AG04449 (cell line): ENCODE measurements at regions of chr6 and their contacts with region 1.

Region 1: GRCh38 chr6:158072083-158072721 is 90.5 kb downstream of the SYNJ2 start:
- DNase-seq: no peak
- H3K4me3 ChIP-seq: no peak overlapping the region
- CTCF ChIP-seq: peak; percentile 75

Region 2: DNA sequence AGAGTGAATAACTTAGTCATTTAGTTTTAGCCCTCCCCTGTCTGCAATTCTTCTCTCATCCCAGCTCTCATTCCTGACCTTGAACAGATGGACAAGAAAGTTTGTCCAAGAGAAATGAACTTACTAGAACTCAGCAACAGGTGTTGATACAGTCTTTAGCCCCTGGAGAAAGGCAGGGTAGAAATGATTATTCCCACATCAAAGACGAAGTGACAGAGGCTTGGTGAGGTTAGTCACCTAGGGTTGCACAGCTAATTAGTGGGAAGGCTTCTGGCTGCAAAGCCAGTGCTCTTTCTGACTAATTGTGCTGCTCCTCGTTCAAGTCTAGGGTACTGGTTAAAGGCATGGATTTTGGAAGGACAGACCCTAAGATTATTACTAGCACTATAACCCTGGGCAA is 686.7 kb before region 1 on chr6:
- CTCF ChIA-PET with region 1: no interaction called
- POLR2A ChIA-PET with region 1: no interaction called
- DNase-seq: no peak
- H3K4me3 ChIP-seq: no peak overlapping the region
- CTCF ChIP-seq: no peak

Region 3: DNA sequence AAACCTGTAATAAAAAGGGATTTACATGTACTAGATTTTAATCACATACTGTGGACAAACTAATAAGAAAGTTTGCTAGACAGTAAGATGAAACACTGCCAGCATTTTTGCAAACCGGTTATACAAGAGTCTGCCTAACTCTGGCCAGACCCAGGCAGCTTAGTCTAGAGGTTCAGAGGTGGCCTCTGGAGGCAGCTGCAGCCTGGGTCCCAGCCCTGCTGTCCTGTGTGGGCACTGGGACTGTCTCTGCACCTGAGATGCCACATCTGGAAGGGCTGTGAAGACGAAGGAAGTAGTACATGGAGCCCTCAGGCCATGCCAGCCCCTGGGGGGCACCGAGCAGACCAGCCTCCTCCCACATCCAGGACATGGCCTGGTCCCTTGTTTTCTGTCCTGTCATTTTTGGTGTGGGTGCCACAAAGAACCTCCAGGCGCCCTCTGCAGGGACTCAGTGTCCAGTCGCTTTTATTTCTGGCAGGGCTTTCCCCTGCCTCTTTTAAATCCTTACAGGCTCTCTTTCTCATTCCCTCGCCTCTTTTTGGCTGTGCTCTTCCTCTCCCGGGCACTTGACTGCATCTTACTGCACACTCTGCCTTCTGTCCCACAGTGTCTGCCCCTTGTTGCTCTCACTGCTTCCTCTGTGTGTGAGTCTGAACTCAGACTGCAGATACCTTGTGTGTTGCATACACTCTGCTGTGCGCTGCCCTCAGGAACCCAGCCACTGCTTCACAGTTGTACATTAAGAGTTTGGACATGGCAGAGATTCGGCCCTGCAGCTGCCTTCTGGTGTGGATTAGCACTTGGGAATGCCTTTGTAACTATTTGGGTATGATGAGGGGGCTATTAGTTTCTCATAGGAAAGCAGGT is 474.5 kb before region 1 on chr6:
- CTCF ChIA-PET with region 1: no interaction called
- POLR2A ChIA-PET with region 1: no interaction called
- DNase-seq: no peak
- H3K4me3 ChIP-seq: no peak overlapping the region
- CTCF ChIP-seq: peak; percentile 49

Region 4: GRCh38 chr6:157898169-157898568 is 174.0 kb before region 1 on chr6:
- CTCF ChIA-PET with region 1: interaction called, 15 read pairs
- POLR2A ChIA-PET with region 1: no interaction called
- DNase-seq: no peak
- H3K4me3 ChIP-seq: no peak overlapping the region
- CTCF ChIP-seq: peak; percentile 22

Region 5: DNA sequence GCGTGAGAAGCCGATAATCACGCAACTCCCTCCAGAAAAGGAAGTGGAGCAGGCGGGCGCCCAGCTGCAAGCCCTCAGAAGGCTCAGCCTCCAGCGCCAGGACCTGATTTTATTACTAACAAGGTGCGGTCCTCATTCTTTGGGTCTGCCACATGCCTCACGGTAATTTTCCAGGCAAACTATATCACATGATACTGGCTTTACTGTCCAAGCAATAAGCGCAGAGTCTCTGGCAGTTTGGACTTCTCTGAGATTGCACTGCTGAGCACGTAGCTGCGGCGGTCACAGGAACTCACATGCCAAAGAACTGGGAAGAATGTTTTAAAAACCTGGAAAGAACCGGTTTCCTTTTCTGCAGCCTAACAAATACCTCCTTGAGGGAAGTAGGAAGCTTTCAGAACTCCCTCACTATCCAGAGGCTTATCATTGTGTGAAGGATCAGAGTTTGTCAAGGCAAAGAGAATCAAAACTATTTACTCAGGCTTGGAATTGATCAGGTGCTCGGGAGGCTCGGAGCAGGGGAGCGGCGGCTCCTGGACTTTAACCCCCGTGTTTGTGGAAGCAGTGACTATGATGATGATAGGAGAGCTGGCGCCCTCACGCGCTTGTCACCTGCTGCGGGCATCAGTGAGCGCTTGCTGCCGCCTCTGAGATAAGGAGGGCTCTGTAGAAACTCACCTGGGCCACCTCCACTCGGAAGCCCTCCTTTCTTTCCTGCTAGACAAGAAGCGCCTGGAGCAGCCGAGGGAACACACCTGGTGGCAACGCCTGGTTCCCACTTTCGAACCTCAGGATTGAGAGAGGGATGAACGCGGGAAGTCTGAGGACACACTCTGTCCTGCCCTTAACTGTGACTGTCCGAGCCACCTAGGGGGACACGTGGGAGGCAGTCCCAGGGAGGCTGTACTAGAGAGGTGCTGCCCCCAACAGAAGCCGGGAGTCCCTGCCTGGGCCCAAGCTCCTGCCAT is 117.8 kb before region 1 on chr6:
- CTCF ChIA-PET with region 1: interaction called, 12 read pairs
- POLR2A ChIA-PET with region 1: no interaction called
- DNase-seq: no peak
- H3K4me3 ChIP-seq: no peak overlapping the region
- CTCF ChIP-seq: no peak

Region 6: GRCh38 chr6:158009114-158009891 is 62.9 kb before region 1 on chr6:
- CTCF ChIA-PET with region 1: interaction called, 12 read pairs
- POLR2A ChIA-PET with region 1: no interaction called
- DNase-seq: no peak
- H3K4me3 ChIP-seq: no peak overlapping the region
- CTCF ChIP-seq: no peak

Region 7: GRCh38 chr6:158047127-158047518 is 25.1 kb before region 1 on chr6:
- CTCF ChIA-PET with region 1: interaction called, 36 read pairs
- POLR2A ChIA-PET with region 1: no interaction called
- DNase-seq: no peak
- H3K4me3 ChIP-seq: no peak overlapping the region
- CTCF ChIP-seq: no peak

Region 8: DNA sequence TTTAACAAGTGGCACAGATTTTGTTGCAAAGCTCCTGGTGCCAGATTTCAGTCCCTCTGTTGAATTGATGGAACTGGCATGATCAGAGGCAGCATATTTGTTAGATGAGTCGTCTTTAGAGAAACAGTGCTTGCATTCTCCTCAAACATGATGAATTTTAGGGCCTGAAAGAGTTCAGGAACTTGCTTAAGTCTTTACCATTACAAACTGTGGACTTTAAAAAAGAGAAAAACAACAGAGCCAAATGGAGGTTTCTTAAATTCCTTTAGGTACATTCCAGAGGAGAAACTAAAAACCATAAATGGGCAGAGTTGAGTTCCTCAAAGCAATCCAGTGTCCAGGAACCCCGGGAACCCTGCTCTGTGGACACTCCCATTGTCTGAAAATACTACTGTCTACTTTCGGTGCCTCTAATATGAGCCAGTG is 98.5 kb after region 1 on chr6:
- CTCF ChIA-PET with region 1: no interaction called
- POLR2A ChIA-PET with region 1: no interaction called
- DNase-seq: peak; percentile 90
- H3K4me3 ChIP-seq: no peak overlapping the region
- CTCF ChIP-seq: no peak